Activated T-helper 2 cell treated with anti-CD3 and anti-CD28 coated beads, Interferon-gamma antibody, Interleukin-2, Interleukin-4, amounts not matched to agents 10 μg/mL and 5 μg/mL and 100 μg/mL, durations not matched to agents 14 hours and 24 hours and 36 hours (primary cell): ENCODE measurements at regions of chr10 and their contacts with region 1.

Region 1: DNA sequence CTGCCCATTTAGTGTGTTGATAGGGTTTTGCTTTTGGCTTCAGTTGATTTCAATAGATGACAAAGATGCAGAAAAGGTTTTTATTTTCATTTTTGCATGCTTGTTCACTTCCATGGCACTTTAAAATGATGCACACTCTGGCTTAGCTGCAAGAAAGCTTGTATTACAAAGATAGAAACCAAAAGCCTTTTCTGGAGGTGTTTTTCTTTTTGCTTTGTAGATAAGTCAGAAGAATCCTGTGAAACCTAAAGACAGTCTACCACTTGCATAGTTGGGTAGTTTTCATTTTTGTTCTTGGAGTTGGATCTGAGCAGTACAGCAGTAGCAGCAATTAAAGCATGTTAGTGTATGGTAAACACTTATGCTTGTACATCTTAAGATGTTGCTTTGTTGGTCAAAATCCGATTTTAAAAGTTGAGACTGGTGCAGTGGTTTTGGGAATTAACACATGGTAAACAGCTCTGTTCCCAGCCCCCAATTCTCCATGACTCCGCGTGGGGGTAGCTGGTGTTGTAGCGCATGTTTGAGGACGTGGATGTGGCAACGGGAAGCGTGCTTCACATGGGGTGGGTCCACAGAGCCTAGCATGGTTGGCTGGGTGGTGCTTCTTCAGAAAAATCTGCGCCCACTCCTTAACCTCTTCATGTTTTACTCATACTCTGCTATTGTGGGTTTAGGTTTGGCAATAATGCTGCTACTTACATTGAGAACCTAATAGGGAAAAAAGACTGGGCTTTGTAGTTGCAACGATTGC is 19.8 kb downstream of the CCNY start:
- DNase-seq: no peak
- H3K4me3 Mint-ChIP-seq: peak overlapping the region; percentile 63
- H3K27ac Mint-ChIP-seq: peak overlapping the region; percentile 92
- H3K4me1 Mint-ChIP-seq: peaks cover 59% of the 10 kb centered on the region
- H3K27me3 Mint-ChIP-seq: no peaks in the 10 kb centered on the region

Region 2: DNA sequence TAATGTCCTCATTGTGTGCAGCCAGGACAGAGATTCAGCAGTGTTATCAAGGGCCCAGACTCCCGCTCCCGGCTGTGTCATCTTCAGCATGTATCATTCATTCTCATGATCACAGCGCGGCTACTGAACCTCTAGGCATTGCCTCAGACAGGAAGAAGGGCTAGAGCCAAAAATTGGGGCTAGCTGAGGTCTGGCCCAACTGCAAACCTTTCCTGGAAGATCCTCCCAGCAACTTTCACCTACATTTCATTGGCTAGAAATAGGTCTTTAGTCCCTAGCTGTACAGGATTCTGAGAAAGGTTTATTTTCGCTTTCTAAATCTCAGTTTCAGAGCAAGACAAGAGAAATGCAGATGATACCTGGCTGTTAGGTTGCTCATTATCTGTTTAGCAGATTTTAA is 147.6 kb before region 1 on chr10:
- intact Hi-C with region 1: no loop called
- DNase-seq: peak; percentile 64
- H3K4me3 Mint-ChIP-seq: peak overlapping the region; percentile 59
- H3K27ac Mint-ChIP-seq: peak overlapping the region; percentile 87
- H3K4me1 Mint-ChIP-seq: peaks cover 57% of the 10 kb centered on the region
- H3K27me3 Mint-ChIP-seq: no peaks in the 10 kb centered on the region

Region 3: DNA sequence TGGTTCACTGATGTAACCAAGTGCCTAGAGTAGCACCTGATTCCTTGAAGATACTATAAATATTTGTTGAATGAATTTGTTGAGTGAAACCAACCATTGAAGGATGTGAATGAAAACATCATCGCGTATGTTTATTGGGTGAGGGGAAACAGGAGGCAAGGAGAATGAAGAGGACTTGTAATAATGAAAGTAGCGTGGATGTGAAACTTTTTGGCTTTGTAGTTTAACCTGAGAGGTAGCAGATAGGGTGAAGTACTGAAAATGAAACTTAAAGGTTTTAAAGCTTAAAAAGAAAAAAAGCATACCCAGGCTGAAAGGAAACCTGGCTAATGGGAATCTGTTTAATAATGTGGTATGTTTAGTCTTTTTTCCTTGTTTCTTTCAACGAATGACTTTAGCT is 14.6 kb before region 1 on chr10:
- intact Hi-C with region 1: loop called (anchors 1 kb)
- DNase-seq: peak; percentile 19
- H3K4me3 Mint-ChIP-seq: peak overlapping the region; percentile 19
- H3K27ac Mint-ChIP-seq: peak overlapping the region; percentile 78
- H3K4me1 Mint-ChIP-seq: peaks cover 56% of the 10 kb centered on the region
- H3K27me3 Mint-ChIP-seq: no peaks in the 10 kb centered on the region

Region 4: GRCh38 chr10:35379226-35380137 is 23.3 kb after region 1 on chr10:
- intact Hi-C with region 1: loop called (anchors 2 kb)
- DNase-seq: no peak
- H3K4me3 Mint-ChIP-seq: no peak overlapping the region
- H3K27ac Mint-ChIP-seq: peak overlapping the region; percentile 28
- H3K4me1 Mint-ChIP-seq: peaks cover 37% of the 10 kb centered on the region
- H3K27me3 Mint-ChIP-seq: no peaks in the 10 kb centered on the region

Region 5: DNA sequence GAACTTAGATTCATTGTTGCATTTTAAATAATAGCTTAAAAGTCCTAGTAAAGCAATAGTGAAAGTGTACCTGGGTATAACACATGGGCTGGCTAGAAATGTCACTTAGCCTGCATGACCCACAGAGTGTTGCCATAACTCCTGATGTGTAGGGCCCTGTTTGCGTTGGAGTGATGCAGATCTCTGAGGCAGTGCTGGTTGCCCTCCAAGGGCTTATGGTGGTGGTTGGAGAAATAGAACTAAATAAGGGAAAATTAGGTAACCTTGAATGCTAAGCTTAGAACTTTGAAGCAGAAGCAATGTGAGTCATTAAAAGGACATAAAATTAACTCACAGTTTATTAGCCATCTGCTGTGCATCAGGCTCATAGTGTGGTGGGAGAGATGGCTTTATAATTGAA is 85.9 kb after region 1 on chr10:
- intact Hi-C with region 1: loop called (anchors 1 kb)
- DNase-seq: no peak
- H3K4me3 Mint-ChIP-seq: no peak overlapping the region
- H3K27ac Mint-ChIP-seq: peak overlapping the region; percentile 87
- H3K4me1 Mint-ChIP-seq: peaks cover 32% of the 10 kb centered on the region
- H3K27me3 Mint-ChIP-seq: no peaks in the 10 kb centered on the region